Mammary epithelial cell (primary cell): ENCODE measurements at regions of chr2 and their contacts with region 1.

Region 1: DNA sequence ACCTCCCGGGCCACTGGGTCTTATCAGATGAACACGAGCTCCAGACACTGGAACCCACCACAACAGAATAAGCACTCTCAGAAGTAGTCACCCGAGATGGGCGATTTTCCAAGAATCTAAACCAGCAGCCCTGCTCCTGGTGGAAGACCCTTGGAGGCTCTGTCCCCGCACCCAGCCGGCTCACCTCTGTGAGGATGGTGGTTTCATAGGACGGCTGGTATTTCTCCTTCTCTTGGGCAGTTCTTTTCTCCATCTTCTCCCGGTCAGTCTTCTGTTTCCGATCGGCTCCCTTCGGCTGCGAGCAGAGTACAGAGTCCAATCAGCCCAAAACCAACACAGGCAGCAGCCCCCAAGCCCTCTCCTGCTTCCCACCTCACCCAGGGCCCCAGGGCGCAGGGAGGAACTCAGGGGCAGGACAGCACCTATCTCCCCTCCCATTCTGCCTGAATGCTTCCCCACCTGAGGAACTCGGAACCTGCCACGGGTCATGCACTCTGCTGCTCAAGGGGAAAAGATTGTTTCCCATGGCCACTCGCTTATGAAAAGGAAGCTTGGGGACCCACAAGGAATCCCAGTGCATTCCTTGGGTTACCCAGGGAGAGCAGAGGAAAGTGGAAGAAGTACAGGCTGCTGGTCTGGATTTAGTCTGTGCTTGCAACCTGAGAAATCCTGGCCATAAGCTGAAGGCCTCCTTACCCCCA is 42.7 kb downstream of the TFCP2L1 start:
- DNase-seq: no peak
- H3K4me3 ChIP-seq: no peak overlapping the region
- H3K27ac ChIP-seq: no peak overlapping the region
- H3K4me1 ChIP-seq: peaks cover 4% of the 10 kb centered on the region
- H3K27me3 ChIP-seq: no peaks in the 10 kb centered on the region
- CTCF ChIP-seq: no peak

Region 2: DNA sequence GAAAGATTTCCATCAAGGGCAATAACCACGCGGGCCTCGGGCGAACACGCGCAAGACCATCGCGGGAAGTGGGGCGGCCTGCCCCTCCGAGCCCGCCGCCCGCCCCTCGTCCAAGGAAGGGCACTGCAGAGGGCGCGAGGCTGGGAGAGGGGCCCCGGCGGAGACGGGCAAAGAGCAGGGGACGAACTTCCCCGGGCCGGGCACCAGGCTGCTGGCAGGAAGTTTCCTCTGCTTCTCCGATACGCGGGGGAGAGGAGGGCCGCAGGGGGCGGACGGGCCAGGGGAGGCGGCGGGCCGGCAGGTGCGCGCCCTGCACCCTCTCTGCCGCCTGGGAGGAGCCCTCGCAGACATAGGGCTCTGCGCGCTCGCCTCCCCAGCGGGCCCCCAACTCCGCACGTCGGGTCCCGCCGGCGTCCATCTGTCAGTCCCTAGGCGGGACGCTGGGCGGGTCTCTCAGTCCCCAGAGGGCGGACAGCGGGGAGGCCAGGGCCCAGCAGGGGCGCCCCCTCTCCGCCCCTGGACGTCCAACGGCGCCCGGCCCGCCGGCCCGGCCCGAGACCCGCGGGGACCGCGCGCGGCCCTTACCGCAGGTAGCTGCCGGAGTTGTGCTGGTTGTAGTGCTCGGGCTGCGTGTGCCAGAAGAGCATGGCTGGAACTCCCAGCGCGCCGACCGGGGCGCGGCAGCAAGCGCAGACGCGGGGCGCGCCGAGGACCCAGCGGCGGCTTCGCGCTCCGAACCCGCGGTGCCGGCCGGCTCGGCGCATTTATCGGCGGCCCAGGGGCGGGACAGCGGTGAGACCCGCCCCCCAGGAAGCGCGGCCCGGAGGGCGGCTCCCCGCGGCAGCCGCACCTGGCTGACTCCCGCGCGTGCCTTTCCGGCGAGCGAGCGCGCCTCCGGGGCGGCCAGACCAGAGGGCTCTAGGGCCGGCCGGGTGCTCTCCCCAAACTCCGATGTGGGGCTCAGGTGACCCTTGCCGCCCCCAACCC is 42.4 kb after region 1 on chr2 and contains the start of gene TFCP2L1:
- CTCF ChIA-PET with region 1: no interaction called
- dilution Hi-C with region 1: no loop called
- in situ Hi-C with region 1: no loop called
- intact Hi-C with region 1: no loop called
- DNase-seq: peak; percentile 74
- H3K4me3 ChIP-seq: peak within 1 kb of the TSS; percentile 63 to 74 (median 73)
- H3K27ac ChIP-seq: peak within 1 kb of the TSS; percentile 56
- H3K4me1 ChIP-seq: peaks cover 20% of the 10 kb centered on the region
- H3K27me3 ChIP-seq: no peaks in the 10 kb centered on the region
- CTCF ChIP-seq: no peak
- total RNA-seq, gene TFCP2L1: 50.5 to 174 TPM

Region 3: GRCh38 chr2:121303531-121304263 is 61.4 kb after region 1 on chr2:
- CTCF ChIA-PET with region 1: no interaction called
- dilution Hi-C with region 1: loop called (anchors 5 kb)
- in situ Hi-C with region 1: no loop called
- intact Hi-C with region 1: no loop called
- DNase-seq: peak; percentile 24
- H3K4me3 ChIP-seq: no peak overlapping the region
- H3K27ac ChIP-seq: no peak overlapping the region
- H3K4me1 ChIP-seq: peaks cover 8% of the 10 kb centered on the region
- H3K27me3 ChIP-seq: no peaks in the 10 kb centered on the region
- CTCF ChIP-seq: no peak